ENCODE measurements at regions of chr3 and their contacts with region 1.

Region 1: DNA sequence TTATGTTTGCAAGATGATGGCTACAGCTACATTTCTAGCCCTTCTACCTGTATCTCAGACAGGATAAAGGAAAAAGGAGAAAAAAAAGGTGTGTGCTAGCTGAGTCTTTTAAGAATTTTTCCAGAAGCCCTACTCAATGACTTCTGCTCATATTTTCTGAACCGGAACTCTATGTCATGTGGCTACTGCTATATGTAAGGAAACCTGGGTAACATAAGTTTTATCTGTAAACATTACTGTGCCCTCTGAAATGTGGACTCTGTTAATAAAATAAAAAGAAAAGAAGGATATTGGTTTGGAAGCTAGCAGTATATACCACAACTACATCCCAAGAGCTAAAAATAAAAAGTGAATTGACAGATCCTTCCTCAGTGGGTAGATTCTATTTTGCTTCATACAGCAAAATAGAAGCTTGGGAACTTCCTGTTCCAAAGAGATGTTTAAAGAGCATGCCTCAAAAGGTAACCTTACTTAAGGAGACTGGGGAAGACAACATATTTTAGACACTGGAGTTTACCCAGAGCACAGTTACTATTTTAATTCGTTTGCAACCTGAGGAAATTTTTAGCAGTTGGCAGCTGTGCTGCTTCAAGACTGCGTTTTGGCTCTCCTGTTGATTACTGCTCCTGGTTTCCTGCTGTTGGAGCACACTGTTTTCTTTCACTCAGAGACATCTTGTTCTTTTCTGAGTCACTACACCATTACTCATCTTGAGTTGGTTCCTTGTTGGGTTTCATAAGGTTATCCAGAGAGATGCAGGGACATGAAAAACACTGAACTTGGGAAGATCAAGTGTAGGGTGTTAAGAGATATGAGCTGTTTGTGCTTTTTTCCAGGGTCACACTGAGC is 280.7 kb downstream of the NFKBIZ start:
- DNase-seq: no peak
- ATAC-seq: peak; percentile 47 to 91 (median 82)
- H3K4me3 ChIP-seq: no peak overlapping the region
- H3K27ac ChIP-seq: peak overlapping the region; percentile 34 to 74 (median 46)
- H3K4me1 ChIP-seq: peaks cover 0 to 28% (median 5%) of the 10 kb centered on the region in 9 donors
- H3K27me3 ChIP-seq: no peaks in the 10 kb centered on the region
- CTCF ChIP-seq: no peak

Region 2: GRCh38 chr3:102006812-102007485 is 123.0 kb before region 1 on chr3:
- intact Hi-C with region 1: loop called in 1 of 10 experiments (anchors 10 kb)
- DNase-seq: peak in 1 of 2 donors; percentile 29
- ATAC-seq: peak in 7 of 8 donors; percentile 47 to 92 (median 75)
- H3K4me3 ChIP-seq: no peak overlapping the region
- H3K27ac ChIP-seq: peak overlapping the region in 4 of 10 donors; percentile 6 to 49 (median 19)
- H3K4me1 ChIP-seq: peaks cover 0 to 21% (median 0%) of the 10 kb centered on the region in 9 donors
- H3K27me3 ChIP-seq: no peaks in the 10 kb centered on the region
- CTCF ChIP-seq: no peak

Region 3: GRCh38 chr3:102151935-102152334 is 22.0 kb after region 1 on chr3:
- intact Hi-C with region 1: loop called in 1 of 10 experiments (anchors 2 kb)
- DNase-seq: no peak
- ATAC-seq: no peak
- H3K4me3 ChIP-seq: no peak overlapping the region
- H3K27ac ChIP-seq: no peak overlapping the region
- H3K4me1 ChIP-seq: no peaks in the 10 kb centered on the region
- H3K27me3 ChIP-seq: no peaks in the 10 kb centered on the region
- CTCF ChIP-seq: no peak